K562 (cell line): ENCODE measurements at regions of chrX and their contacts with region 1.

Region 1: GRCh38 chrX:10119399-10119990 is 37.3 kb upstream of the CLCN4 start:
- DNase-seq: peak; percentile 49 to 80 (median 56)
- ATAC-seq: peak; percentile 47; the same call in 1 of the 3 replicates
- H3K4me3 ChIP-seq: no peak overlapping the region
- H3K27ac ChIP-seq: no peak overlapping the region
- H3K4me1 ChIP-seq: no peaks in the 10 kb centered on the region
- H3K27me3 ChIP-seq: peaks cover 0 to 5% of the 10 kb centered on the region in 2 experiments; a peak in 2 of 5 replicates
- CTCF ChIP-seq: peak; percentile 99 to 100 (median 100)
- EP300 ChIP-seq: peak; percentile 69; the same call in 1 of the 2 replicates
- POLR2A ChIP-seq: no peak
- RAD21 ChIP-seq: peak; percentile 100

Region 2: GRCh38 chrX:8755116-8755515 is 1364.4 kb before region 1 on chrX:
- CTCF ChIA-PET with region 1: interaction called, 13 read pairs
- POLR2A ChIA-PET with region 1: no interaction called
- in situ Hi-C with region 1: loop called (anchors 10 kb)
- intact Hi-C with region 1: no loop called
- DNase-seq: peak; percentile 3 to 10 (median 6)
- ATAC-seq: no peak
- H3K4me3 ChIP-seq: no peak overlapping the region
- H3K27ac ChIP-seq: no peak overlapping the region
- H3K4me1 ChIP-seq: no peaks in the 10 kb centered on the region
- H3K27me3 ChIP-seq: no peaks in the 10 kb centered on the region
- CTCF ChIP-seq: peak; percentile 11 to 90 (median 49); a peak in 4 of 6 replicates
- EP300 ChIP-seq: no peak
- POLR2A ChIP-seq: no peak
- RAD21 ChIP-seq: no peak

Region 3: GRCh38 chrX:8815464-8816065 is 1303.9 kb before region 1 on chrX:
- CTCF ChIA-PET with region 1: interaction called, 86 read pairs
- POLR2A ChIA-PET with region 1: no interaction called
- in situ Hi-C with region 1: loop called (anchors 10 kb)
- intact Hi-C with region 1: loop called (anchors 1 kb)
- DNase-seq: peak; percentile 52 to 69 (median 60)
- ATAC-seq: peak; percentile 81
- H3K4me3 ChIP-seq: no peak overlapping the region
- H3K27ac ChIP-seq: no peak overlapping the region
- H3K4me1 ChIP-seq: no peaks in the 10 kb centered on the region
- H3K27me3 ChIP-seq: no peaks in the 10 kb centered on the region
- CTCF ChIP-seq: peak; percentile 54 to 63 (median 59); a peak in 5 of 6 replicates
- EP300 ChIP-seq: no peak
- POLR2A ChIP-seq: no peak
- RAD21 ChIP-seq: peak; percentile 36 to 48; a peak in 3 of 4 replicates

Region 4: GRCh38 chrX:9885150-9885549 is 234.3 kb before region 1 on chrX:
- CTCF ChIA-PET with region 1: interaction called, 18 read pairs
- POLR2A ChIA-PET with region 1: interaction called, 5 read pairs
- in situ Hi-C with region 1: loop called (anchors 25 kb)
- intact Hi-C with region 1: loop called (anchors 1 kb)
- DNase-seq: peak; percentile 31 to 56 (median 42)
- ATAC-seq: peak; percentile 94
- H3K4me3 ChIP-seq: no peak overlapping the region
- H3K27ac ChIP-seq: no peak overlapping the region
- H3K4me1 ChIP-seq: no peaks in the 10 kb centered on the region; a peak in 2 of 5 replicates
- H3K27me3 ChIP-seq: peaks cover 0 to 3% of the 10 kb centered on the region in 2 experiments; a peak in 2 of 5 replicates
- CTCF ChIP-seq: peak; percentile 58 to 78 (median 67)
- EP300 ChIP-seq: no peak
- POLR2A ChIP-seq: no peak
- RAD21 ChIP-seq: peak in 1 of 2 experiments; percentile 53; a peak in 2 of 4 replicates

Region 5: DNA sequence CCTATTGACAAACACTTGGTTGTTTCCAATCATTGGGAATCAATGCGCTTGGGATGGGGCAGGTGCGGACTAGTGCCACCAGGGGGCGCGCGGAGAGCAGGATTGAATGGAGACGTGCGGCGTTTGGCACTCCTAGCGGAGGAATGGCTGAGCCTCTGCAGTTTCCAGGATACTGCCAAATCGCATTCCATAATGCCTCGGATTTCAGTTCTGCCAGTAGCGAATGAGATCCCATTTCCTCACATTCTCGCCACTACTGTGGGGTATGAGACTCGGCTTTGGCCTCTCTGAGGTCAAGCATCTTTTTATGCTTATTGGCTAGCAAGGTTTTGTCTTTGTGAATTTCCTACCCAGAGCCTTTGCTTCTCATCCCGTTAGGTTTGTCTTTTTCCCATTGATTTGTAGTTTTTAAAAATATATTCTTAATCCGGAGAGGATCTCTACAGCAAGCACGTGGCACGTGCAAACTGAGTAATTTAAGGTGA is 123.6 kb before region 1 on chrX:
- CTCF ChIA-PET with region 1: interaction called, 400 read pairs
- POLR2A ChIA-PET with region 1: no interaction called
- in situ Hi-C with region 1: loop called (anchors 5 kb)
- intact Hi-C with region 1: loop called (anchors 1 kb)
- DNase-seq: peak; percentile 64 to 75 (median 70)
- ATAC-seq: peak; percentile 90
- H3K4me3 ChIP-seq: no peak overlapping the region
- H3K27ac ChIP-seq: no peak overlapping the region
- H3K4me1 ChIP-seq: no peaks in the 10 kb centered on the region
- H3K27me3 ChIP-seq: peaks cover 0 to 14% of the 10 kb centered on the region in 2 experiments; a peak in 2 of 5 replicates
- CTCF ChIP-seq: peak; percentile 87 to 100 (median 95)
- EP300 ChIP-seq: no peak
- POLR2A ChIP-seq: no peak
- RAD21 ChIP-seq: peak; percentile 83